PC-9 (cell line): ENCODE measurements at regions of chr9 and their contacts with region 1.

Region 1: DNA sequence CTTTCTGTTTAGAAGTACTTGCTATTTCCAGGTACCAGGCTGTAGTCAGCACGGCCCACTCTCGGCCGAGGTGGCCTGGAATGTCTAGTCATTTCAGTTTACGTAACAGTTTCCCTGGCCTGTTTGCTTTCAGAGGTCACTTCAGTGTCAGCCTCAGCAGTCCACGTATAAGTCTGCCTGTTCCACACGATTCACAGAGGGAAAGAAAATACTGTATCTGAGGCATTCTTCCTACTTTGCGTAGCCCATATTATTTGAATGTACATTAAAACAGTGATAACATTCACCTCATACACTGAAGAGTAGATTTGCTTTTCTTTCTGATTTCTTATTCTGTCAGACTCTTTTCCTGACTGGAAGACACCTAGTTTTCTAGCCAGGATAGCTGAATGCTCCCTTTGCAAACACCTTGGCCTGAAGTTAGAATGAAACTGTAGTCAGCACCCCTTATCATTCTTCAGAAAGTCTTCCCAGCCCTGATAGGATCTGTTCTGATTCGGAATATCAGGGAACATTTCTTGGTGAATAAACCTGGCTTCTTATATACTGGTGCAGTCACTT is 140.9 kb downstream of the AOPEP start:
- DNase-seq: peak; percentile 78 to 93
- H3K4me3 ChIP-seq: peak overlapping the region; percentile 34; the same call in 1 of the 2 replicates
- H3K27ac ChIP-seq: peak overlapping the region; percentile 100
- H3K4me1 ChIP-seq: peaks cover 82% of the 10 kb centered on the region
- H3K27me3 ChIP-seq: no peaks in the 10 kb centered on the region
- CTCF ChIP-seq: no peak

Region 2: DNA sequence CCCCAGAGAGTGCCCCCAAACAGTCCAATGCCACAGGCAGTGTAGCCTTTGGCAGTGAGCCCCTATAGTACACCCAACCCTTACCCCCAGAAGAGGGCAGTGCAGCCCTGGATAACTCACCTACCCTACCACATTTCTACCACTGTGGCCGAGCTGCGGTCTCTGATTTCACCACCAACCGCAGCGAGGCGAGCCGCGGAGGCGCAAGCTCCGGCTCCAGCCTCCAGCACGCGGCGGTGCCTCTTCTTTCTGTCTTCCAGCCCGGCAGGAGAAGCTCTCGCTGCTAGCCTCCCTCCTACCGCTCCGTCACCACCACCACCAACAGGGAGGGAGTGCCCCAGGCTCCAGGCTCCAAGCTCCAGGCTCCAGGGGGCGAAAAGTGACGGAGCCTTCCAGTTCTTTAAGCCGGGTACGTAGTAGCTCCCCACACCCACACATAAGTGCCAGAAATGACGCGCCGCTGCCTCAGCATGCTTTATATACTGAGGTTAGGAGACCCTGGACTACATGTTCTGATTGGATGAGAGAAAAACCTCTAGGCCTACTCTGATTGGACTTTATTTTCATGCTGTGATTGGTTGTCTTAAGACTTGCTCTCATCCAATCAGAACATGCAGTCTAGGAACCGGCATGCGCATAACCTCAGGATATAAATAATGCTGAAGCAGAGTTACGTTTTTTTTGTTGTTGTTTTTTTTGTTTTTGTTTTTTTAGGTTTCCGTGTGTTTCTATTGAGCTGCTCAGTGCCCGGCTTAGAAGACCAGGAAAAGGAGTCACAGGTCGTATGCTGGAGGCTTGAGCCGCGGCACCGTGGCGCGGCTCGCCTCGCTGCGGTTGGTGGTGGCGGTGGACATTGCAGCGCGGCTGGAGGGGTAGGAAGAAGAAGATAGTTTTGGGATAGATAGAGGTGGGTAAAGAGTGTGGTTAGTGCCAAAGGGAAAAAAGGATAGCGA is 312.6 kb before region 1 on chr9 and contains the start of gene PCAT7:
- CTCF ChIA-PET with region 1: no interaction called
- POLR2A ChIA-PET with region 1: no interaction called
- intact Hi-C with region 1: loop called (anchors 1 kb)
- DNase-seq: peak; percentile 78 to 87
- H3K4me3 ChIP-seq: peak within 1 kb of the TSS; percentile 67
- H3K27ac ChIP-seq: peak within 1 kb of the TSS; percentile 82
- H3K4me1 ChIP-seq: peaks cover 5% of the 10 kb centered on the region
- H3K27me3 ChIP-seq: no peaks in the 10 kb centered on the region
- CTCF ChIP-seq: peak; percentile 82
- total RNA-seq, gene PCAT7: 3.8 and 3.9 TPM in 2 replicates

Region 3: GRCh38 chr9:94726495-94727191 is 140.7 kb before region 1 on chr9 and contains the start of gene AOPEP:
- CTCF ChIA-PET with region 1: interaction called, 3 read pairs
- POLR2A ChIA-PET with region 1: no interaction called
- intact Hi-C with region 1: loop called (anchors 5 kb)
- DNase-seq: peak; percentile 85 to 99
- H3K4me3 ChIP-seq: peak within 1 kb of the TSS; percentile 72
- H3K27ac ChIP-seq: peak within 1 kb of the TSS; percentile 69
- H3K4me1 ChIP-seq: peaks cover 16% of the 10 kb centered on the region
- H3K27me3 ChIP-seq: no peaks in the 10 kb centered on the region
- CTCF ChIP-seq: no peak
- total RNA-seq, gene AOPEP: 90.0 and 135 TPM in 2 replicates

Region 4: GRCh38 chr9:94821098-94821887 is 46.1 kb before region 1 on chr9:
- CTCF ChIA-PET with region 1: no interaction called
- POLR2A ChIA-PET with region 1: interaction called, 6 read pairs
- intact Hi-C with region 1: loop called (anchors 1 kb)
- DNase-seq: no peak
- H3K4me3 ChIP-seq: no peak overlapping the region
- H3K27ac ChIP-seq: peak overlapping the region; percentile 96; the same call in 1 of the 2 replicates
- H3K4me1 ChIP-seq: peaks cover 64% of the 10 kb centered on the region
- H3K27me3 ChIP-seq: no peaks in the 10 kb centered on the region
- CTCF ChIP-seq: no peak

Region 5: DNA sequence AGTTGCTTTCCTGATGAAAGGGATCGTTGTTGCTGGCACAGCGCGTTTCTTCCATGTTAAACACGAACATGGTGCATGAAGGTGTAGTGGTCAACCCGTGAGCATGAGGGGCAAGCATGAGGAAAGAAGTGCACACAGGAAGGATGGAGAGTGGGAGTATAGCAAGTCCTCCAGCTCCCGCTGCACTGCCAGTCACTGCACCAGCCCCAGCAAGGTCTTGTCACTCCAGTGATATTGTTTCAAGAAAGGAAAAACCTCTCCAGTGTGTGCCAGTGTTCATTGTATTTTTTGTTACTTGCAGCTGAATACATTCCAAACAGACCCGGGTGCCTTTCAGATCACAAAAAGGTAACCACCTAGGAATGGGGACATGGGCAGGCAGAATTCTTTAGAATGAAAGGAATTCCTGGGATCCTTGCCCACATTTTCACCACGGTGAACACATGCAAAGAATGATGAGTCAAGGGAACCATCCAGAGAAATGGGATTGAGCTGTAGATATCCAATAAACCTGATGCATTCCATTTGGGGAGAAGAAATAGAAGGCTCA is 45.4 kb after region 1 on chr9:
- CTCF ChIA-PET with region 1: interaction called, 3 read pairs
- POLR2A ChIA-PET with region 1: interaction called, 23 read pairs
- intact Hi-C with region 1: loop called (anchors 1 kb)
- DNase-seq: peak; percentile 79 to 94
- H3K4me3 ChIP-seq: no peak overlapping the region
- H3K27ac ChIP-seq: peak overlapping the region; percentile 97
- H3K4me1 ChIP-seq: peaks cover 68% of the 10 kb centered on the region
- H3K27me3 ChIP-seq: no peaks in the 10 kb centered on the region
- CTCF ChIP-seq: no peak

Region 6: GRCh38 chr9:94937214-94937903 is 70.0 kb after region 1 on chr9:
- CTCF ChIA-PET with region 1: no interaction called
- POLR2A ChIA-PET with region 1: no interaction called
- intact Hi-C with region 1: no loop called
- DNase-seq: peak; percentile 35 to 90
- H3K4me3 ChIP-seq: no peak overlapping the region
- H3K27ac ChIP-seq: peak overlapping the region; percentile 85
- H3K4me1 ChIP-seq: peaks cover 43% of the 10 kb centered on the region
- H3K27me3 ChIP-seq: no peaks in the 10 kb centered on the region
- CTCF ChIP-seq: no peak

Region 7: GRCh38 chr9:95004411-95005277 is 137.3 kb after region 1 on chr9:
- CTCF ChIA-PET with region 1: no interaction called
- POLR2A ChIA-PET with region 1: interaction called, 4 read pairs
- intact Hi-C with region 1: loop called (anchors 1 kb)
- DNase-seq: peak in 1 of 2 experiments; percentile 65
- H3K4me3 ChIP-seq: peak overlapping the region; percentile 91
- H3K27ac ChIP-seq: peak overlapping the region; percentile 90
- H3K4me1 ChIP-seq: peaks cover 46% of the 10 kb centered on the region
- H3K27me3 ChIP-seq: no peaks in the 10 kb centered on the region
- CTCF ChIP-seq: no peak